Activated T-helper 1 cell treated with anti-CD3 and anti-CD28 coated beads, Interleukin-12 subunit alpha, Interleukin-12 subunit beta, Interleukin-2, Interleukin-4 antibody, amounts not matched to agents 30 ng/mL and 10 ng/mL and 1 ng/mL, durations not matched to agents 14 hours and 24 hours and 36 hours (primary cell): ENCODE measurements at regions of chr6 and their contacts with region 1.

Region 1: GRCh38 chr6:160221423-160221822 is 37.2 kb downstream of the SLC22A2 start:
- DNase-seq: no peak
- H3K4me3 Mint-ChIP-seq: no peak overlapping the region
- H3K27ac Mint-ChIP-seq: no peak overlapping the region
- H3K4me1 Mint-ChIP-seq: no peaks in the 10 kb centered on the region
- H3K27me3 Mint-ChIP-seq: no peaks in the 10 kb centered on the region

Region 2: DNA sequence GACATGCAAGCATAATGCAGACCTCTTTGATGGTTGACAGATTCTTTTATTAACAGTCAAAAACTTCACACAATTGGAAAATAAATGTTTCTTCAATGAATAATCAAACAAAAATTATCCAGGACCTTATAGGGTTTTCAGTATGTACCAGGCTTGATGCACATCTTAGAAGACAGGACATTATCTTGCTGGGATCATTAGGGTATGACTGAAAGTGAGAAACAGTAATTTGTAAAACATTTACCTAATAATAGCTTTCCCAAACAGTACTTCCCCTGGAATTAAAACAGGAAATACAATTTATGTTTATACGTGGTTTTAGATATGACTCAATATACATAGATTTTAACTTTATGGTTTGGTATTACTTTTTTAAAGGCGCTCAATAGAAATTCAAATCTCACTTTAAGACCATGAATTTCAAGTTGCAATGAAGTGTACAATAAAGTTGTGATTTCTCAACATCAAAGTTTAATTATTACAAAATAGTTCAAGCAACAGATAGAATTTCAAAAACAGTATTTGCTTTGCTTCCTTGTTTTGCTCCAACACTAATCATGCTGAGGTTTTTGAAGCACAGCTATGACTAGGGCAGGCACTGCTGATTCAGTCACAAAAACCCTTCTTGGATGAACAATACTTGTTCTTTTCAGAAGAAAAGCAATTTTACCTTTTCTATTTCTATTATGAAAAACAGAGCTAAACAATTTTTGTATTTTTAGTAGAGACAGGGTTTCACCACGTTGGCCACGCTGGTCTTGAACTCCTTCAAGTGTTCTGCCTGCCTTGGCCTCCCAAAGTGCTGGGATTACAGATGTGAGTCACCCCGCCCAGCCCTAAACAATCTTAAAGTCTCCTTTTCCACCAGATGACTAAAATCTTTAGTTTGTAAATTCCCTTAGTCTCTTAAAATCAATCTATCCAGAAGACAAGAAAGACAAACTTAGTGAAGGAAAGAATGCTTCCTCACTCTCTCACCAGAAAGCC is 542.0 kb before region 1 on chr6:
- intact Hi-C with region 1: loop called (anchors 10 kb)
- DNase-seq: no peak
- H3K4me3 Mint-ChIP-seq: no peak overlapping the region
- H3K27ac Mint-ChIP-seq: peak overlapping the region; percentile 82
- H3K4me1 Mint-ChIP-seq: peaks cover 27% of the 10 kb centered on the region
- H3K27me3 Mint-ChIP-seq: no peaks in the 10 kb centered on the region

Region 3: DNA sequence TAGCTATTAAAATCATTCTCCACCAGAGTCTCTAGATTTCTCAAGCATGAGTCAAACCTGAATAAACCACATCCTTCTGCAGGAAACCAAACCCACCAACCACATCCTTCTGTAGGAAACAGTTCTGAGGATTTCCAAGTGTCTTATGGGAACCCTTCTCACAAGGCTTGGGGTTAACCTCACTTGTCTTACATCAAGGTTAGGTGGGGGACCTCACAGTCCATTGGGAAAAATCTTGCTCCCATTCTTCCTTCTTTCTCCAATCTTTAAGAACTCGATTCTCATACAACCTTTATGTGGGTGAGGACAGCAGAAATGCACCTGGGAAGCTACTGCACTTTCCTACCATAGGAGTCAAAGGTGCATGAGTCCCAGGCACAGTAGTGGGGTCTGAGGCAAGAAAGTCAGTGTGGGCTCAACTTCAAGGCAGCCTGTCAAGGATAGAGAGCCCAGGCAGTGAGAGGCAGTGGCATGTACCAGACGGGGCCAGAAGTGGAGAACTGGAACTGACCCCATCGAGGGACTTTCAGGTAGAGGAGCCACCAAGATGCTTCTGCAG is 241.2 kb after region 1 on chr6:
- intact Hi-C with region 1: loop called (anchors 2 kb)
- DNase-seq: peak; percentile 76
- H3K4me3 Mint-ChIP-seq: peak overlapping the region; percentile 34
- H3K27ac Mint-ChIP-seq: peak overlapping the region; percentile 71
- H3K4me1 Mint-ChIP-seq: peaks cover 79% of the 10 kb centered on the region
- H3K27me3 Mint-ChIP-seq: peaks cover 14% of the 10 kb centered on the region

Region 4: DNA sequence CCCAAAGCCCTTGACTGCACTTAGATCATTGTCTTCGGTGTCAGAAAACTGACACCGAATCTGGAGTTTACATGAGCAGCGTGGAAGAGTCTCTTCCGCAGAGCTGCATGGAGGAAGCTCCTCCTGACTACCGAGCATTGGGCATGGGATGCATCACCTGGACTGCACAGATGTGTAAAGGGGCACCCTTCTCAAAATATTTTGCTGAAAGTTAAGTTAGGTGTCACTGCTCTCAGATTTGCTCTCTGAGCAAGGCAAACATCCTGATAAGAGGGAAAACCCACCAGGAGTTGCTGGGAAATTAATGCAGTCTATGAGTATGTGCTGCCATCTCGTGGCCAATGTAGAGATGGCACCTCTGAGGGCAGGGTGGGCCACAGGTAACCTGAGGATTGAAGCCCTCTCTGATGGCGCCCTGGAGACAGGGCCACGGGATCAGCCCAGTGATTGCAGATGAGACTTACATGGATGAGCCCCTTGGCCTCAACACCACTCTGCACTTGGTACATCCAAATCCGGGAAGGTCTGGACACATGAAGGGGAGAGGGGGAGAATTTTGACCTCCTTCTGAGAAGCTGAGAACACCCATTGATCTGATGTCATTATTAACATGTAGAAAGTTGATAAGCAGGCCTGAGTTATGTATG is 312.8 kb after region 1 on chr6:
- intact Hi-C with region 1: loop called (anchors 10 kb)
- DNase-seq: peak; percentile 19
- H3K4me3 Mint-ChIP-seq: no peak overlapping the region
- H3K27ac Mint-ChIP-seq: no peak overlapping the region
- H3K4me1 Mint-ChIP-seq: no peaks in the 10 kb centered on the region
- H3K27me3 Mint-ChIP-seq: peaks cover 18% of the 10 kb centered on the region